ENCODE measurements at regions of chr5 and their contacts with region 1.

Region 1: DNA sequence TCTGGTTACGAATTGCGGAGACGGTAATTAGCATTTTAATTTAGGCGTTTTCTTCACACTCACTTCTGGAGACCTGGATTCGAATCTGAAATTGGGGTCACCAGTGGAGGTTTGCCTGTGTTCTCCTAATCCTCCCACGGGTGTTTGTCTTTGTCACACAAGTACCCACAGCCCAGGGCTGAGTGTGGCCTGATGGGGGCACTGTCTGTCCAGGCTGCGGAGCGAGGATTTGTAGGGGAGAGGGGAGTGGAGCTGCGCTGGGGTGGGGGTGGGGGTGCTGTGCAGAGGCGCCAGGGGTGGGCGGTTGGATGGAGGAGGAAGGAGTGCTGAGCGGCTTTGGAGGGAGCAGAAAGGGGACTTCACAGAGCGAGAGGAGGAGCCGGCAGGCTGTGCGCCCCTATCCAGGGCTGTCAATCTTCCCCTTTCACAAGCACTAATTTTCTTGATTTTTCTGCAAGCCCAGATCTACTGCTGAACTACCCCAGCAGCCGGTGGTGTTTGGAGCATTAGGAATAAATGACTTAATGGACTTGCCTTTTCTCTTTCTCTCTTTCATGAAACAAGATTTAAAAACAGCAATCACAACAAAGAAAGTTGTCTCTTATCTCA is 53.1 kb downstream of the TSPAN17 start:
- DNase-seq: peak; percentile 70
- ATAC-seq: peak; percentile 53
- H3K4me3 Mint-ChIP-seq: no peak overlapping the region; the same call in 1 of the 2 replicates
- H3K27ac Mint-ChIP-seq: peak overlapping the region; percentile 37; the same call in 1 of the 2 replicates
- H3K4me1 Mint-ChIP-seq: peaks cover 59% of the 10 kb centered on the region
- H3K27me3 Mint-ChIP-seq: peaks cover 7% of the 10 kb centered on the region
- CTCF ChIP-seq: no peak

Region 2: DNA sequence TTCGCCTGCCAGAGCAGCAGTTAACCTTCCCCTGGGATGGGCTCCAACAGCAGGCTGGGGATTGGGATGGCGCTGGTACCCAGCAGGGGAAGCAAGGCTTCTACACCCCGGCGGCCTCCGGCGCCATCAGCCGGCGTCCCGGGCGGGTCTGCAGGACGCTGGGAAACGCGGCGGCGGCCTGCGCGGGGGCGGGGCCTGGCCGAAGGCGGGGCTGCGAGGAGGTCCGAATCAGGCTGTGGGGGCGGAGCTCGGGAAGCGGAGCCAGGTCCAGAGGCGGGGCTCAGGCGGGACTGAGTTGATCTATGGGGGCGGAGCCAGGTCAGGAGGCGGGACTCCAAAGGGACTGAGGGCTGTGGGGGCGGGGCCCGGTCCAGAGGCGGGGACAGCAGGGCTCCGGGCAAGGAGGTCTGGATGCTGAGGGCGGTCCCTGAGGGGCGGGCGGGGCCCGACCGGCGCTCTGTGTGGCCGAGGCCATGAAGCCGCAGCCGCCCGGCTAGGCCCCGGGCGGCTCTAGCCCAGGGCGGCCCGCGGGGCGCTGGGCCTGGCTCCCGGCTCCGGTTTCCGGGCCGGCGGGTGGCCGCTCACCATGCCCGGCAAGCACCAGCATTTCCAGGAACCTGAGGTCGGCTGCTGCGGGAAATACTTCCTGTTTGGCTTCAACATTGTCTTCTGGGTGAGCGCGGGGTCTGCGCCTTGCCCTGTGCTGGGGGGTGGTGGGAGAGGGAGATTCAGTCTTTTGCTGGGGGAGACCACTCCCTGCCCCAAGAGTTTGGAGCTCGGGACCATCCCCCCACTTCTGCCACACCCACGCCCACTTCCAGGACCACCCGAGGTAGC is 53.1 kb before region 1 on chr5 and contains the start of gene TSPAN17:
- CTCF ChIA-PET with region 1: no interaction called
- POLR2A ChIA-PET with region 1: no interaction called
- DNase-seq: peak; percentile 100
- ATAC-seq: peak; percentile 93
- H3K4me3 Mint-ChIP-seq: peak within 1 kb of the TSS; percentile 81
- H3K27ac Mint-ChIP-seq: peak within 1 kb of the TSS; percentile 90
- H3K4me1 Mint-ChIP-seq: peaks cover 45% of the 10 kb centered on the region
- H3K27me3 Mint-ChIP-seq: no peaks in the 10 kb centered on the region
- CTCF ChIP-seq: no peak
- total RNA-seq, gene TSPAN17: 45.7 to 47.8 TPM (median 46.1 TPM) in 3 replicates

Region 3: DNA sequence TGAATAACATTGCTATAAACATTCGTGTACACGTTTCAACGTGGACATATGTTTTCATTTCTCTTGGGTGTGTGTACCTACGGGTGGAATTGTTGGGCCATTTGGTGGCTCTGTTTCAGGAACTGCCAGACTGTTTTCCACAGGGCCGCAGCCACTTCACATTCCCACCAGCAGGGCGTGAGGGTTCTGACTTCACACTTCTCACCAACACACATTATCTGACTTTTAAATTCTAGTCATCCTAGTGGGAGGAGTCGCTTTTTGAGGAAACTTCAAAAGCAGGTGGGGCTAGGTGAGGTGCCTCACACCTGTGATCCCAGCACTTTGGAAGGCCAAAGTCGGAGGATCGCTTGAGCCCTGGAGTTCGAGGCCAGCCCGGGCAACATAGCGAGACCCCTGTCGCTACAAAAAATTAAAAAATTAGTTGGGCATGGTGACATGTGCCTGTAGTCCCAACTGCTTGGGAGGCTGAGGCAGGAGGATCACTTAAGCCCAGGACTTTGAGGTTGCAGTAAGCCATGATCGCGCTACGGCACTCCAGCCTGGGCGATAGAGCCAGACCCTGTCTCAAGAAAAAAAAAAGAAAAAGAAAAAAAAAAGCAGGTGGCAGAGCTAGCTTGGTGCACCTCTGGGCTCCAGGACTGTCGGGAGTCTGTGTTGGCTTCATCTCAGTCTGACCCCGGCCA is 24.5 kb before region 1 on chr5:
- CTCF ChIA-PET with region 1: interaction called, 14 read pairs
- POLR2A ChIA-PET with region 1: no interaction called
- DNase-seq: peak; percentile 72
- ATAC-seq: peak; percentile 51
- H3K4me3 Mint-ChIP-seq: no peak overlapping the region
- H3K27ac Mint-ChIP-seq: peak overlapping the region; percentile 67
- H3K4me1 Mint-ChIP-seq: peaks cover 37% of the 10 kb centered on the region
- H3K27me3 Mint-ChIP-seq: peaks cover 9% of the 10 kb centered on the region
- CTCF ChIP-seq: peak; percentile 51; the same call in 1 of the 2 replicates

Region 4: DNA sequence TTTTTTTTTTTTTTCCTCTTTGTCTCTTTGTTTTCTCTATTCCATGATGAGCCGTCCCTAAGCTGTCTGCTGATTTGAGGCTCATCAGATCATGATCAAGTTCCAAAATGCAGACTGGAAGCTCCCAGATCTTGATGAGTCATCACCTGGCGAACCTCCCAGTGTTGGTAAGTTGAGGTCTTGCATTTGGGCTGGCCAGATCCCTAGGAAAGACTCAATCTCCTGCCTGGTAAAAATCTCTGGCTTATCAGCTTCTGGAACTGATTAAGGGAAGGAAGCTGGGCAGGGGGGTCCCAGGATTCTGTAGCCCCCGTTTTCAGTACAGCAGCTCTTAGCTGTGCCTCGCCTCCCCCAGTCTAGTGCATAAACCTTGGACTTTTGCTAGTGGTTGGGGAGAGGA is 16.0 kb after region 1 on chr5:
- CTCF ChIA-PET with region 1: interaction called, 37 read pairs
- POLR2A ChIA-PET with region 1: no interaction called
- DNase-seq: no peak
- ATAC-seq: no peak
- H3K4me3 Mint-ChIP-seq: no peak overlapping the region
- H3K27ac Mint-ChIP-seq: 0 out of 2 replicates have a peak overlapping the region, but pooled peaks have one; percentile 68
- H3K4me1 Mint-ChIP-seq: peaks cover 25% of the 10 kb centered on the region
- H3K27me3 Mint-ChIP-seq: peaks cover 8% of the 10 kb centered on the region
- CTCF ChIP-seq: no peak

Region 5: DNA sequence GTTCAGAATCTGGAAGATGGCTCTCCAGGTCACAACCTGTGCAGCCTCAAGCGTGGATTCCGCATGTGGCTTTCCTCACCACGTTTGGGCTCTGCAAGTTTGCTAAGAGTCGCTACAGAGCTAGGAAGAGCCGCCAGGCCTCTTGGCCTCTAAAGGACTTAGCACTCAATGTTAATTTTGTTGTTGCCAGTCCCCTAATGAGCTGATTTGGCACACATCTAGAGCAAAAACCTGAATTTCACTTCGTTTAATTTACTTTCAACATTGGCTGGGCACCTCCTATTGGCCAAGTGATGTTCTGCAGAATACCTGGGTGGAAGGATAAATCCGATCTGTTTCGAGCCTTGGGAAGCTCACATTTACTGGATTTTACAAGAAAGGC is 44.2 kb after region 1 on chr5:
- CTCF ChIA-PET with region 1: interaction called, 29 read pairs
- POLR2A ChIA-PET with region 1: interaction called, 3 read pairs
- DNase-seq: no peak
- ATAC-seq: no peak; the same call in 1 of the 2 replicates
- H3K4me3 Mint-ChIP-seq: peak overlapping the region; percentile 70
- H3K27ac Mint-ChIP-seq: no peak overlapping the region
- H3K4me1 Mint-ChIP-seq: peaks cover 64% of the 10 kb centered on the region
- H3K27me3 Mint-ChIP-seq: peaks cover 37% of the 10 kb centered on the region
- CTCF ChIP-seq: no peak

Region 6: DNA sequence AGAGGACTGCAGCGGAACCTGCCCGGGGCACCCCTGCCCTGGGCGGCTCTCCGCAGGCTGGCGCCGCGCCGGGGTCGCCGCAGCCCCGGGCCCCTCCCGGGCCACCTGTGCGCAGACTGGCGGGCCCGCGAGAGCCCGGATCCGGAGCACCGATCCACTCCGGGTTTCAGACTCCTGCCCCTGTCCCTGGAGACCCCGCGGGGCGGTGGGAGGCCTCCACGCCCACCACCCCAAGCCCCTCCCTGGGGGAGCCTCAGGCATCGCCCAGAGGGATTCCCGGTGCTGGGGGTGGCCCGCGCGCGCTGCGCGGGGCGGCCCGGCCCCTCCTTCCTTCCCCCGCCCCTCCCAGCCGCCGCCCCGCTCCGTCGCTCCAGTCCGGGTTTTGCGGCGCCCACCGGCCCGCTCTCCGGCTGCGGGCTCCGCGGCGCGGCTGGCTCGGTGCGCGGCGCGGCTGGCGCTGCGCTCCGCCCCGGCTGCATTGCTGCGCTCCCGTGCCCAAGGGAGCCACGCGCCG is 109.8 kb after region 1 on chr5 and contains the start of gene UNC5A:
- CTCF ChIA-PET with region 1: interaction called, 16 read pairs
- POLR2A ChIA-PET with region 1: no interaction called
- DNase-seq: peak; percentile 73
- ATAC-seq: peak; percentile 48
- H3K4me3 Mint-ChIP-seq: peak within 1 kb of the TSS; percentile 86
- H3K27ac Mint-ChIP-seq: no peak within 1 kb of the TSS
- H3K4me1 Mint-ChIP-seq: peaks cover 35% of the 10 kb centered on the region
- H3K27me3 Mint-ChIP-seq: peaks cover 70% of the 10 kb centered on the region
- CTCF ChIP-seq: no peak
- total RNA-seq, gene UNC5A: 7.9 to 10.2 TPM (median 9.4 TPM) in 3 replicates

Measured in WTC11 (cell line).